Right ventricle myocardium inferior (tissue), 1 donor: ENCODE measurements at regions of chr11 and their contacts with region 1.

Region 1: GRCh38 chr11:69101115-69101791 is 52.5 kb downstream of the TPCN2 start:
- DNase-seq: peak; percentile 83
- ATAC-seq: peak; percentile 87

Region 2: GRCh38 chr11:69048718-69049489 is 52.3 kb before region 1 on chr11 and contains the start of gene TPCN2:
- intact Hi-C with region 1: no loop called
- DNase-seq: peak; percentile 95
- ATAC-seq: peak; percentile 93
- total RNA-seq, gene TPCN2: 9.1 TPM

Region 3: DNA sequence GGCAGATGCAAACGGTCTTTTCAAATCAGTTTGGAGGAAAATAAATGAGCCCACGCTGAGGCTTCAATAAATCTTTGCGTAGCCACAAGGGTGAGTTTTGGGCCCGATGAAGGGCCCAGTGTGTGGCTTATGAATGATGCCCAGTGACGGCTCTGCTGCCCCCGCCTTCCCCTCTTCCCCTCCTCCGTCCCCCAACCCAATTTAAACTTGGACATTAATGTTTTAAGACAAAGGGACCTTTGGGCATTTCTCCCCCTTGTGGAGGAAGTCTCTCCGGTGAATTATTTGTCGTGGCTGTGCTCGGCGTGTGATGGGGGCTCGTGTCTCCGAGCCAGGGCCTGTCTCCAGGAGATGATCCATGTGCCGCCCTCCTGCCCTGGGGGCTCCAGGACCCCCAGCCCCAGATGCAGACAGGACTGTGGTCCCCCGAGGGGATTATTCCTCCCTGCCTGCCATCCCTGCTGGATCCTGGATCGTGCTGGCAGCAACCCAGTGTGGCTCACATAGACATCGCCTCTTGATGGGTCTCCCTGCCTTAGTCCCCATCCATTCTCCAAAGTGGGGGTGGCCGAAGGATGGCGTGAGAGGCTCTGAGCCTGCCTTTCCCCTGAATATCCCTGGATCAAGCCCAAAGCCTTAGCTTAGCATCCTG is 110.8 kb after region 1 on chr11:
- intact Hi-C with region 1: loop called (anchors 10 kb)
- DNase-seq: no peak
- ATAC-seq: no peak

Region 4: GRCh38 chr11:69296890-69297786 is 195.9 kb after region 1 on chr11:
- intact Hi-C with region 1: loop called (anchors 5 kb)
- DNase-seq: peak; percentile 97
- ATAC-seq: peak; percentile 76

Region 5: DNA sequence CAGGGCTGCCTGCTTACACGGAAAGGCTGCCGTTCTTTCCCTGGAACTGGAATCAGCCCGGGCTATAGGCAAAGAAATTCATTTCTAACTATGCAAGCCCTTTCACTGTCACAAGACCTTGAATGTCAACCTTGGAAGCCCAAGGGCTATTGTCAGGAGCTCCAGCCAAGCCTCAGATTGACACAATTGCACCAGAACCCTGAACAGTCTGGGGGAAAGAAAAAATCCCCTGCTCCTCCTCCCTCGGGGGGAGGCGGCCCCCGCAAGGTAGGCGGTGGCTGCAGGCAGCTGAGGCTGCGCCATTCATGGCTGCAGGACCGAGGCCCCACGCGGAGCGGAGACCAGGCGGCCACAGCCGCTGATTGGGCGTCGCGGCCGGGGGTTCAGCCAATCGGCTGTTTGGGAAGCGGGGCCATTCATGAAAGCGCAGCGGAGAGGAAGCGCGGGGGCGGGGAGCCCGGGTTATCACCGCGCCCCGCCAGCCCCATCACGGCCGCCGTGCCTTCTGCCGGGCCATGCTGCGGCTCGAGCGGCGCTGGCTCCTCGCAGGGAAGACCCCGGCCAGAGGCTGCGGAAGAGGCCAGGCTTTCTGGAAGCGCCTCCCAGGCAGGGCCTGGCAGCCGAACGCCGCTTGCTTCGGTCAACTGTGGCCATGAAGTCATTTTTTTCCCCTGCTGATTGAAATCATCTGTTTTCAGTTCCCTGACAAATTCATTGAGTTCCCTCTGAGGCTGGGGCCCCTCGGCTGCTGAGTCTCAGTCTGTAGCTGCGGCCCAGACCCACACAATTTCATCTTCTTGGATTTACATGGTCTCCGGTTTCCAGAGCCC is 342.1 kb after region 1 on chr11:
- intact Hi-C with region 1: loop called (anchors 10 kb)
- DNase-seq: peak; percentile 95
- ATAC-seq: peak; percentile 94

Region 6: GRCh38 chr11:69670158-69670845 is 569.0 kb after region 1 on chr11:
- intact Hi-C with region 1: loop called (anchors 1 kb)
- DNase-seq: peak; percentile 89
- ATAC-seq: peak; percentile 66